CD4-positive, alpha-beta T cell (primary cell): ENCODE measurements at regions of chr14 and their contacts with region 1.

Region 1: GRCh38 chr14:77799863-77800730 is at the start of gene ADCK1:
- DNase-seq: peak; percentile 62 to 90 (median 78)
- ATAC-seq: peak; percentile 90
- H3K4me3 ChIP-seq: peak within 1 kb of the TSS; percentile 67
- H3K4me3 Mint-ChIP-seq: peak within 1 kb of the TSS; percentile 85
- H3K27ac ChIP-seq: peak within 1 kb of the TSS; percentile 60 to 85
- H3K27ac Mint-ChIP-seq: peak within 1 kb of the TSS; percentile 74
- H3K4me1 ChIP-seq: peaks cover 13% of the 10 kb centered on the region
- H3K4me1 Mint-ChIP-seq: peaks cover 11% of the 10 kb centered on the region
- H3K27me3 ChIP-seq: no peaks in the 10 kb centered on the region
- H3K27me3 Mint-ChIP-seq: no peaks in the 10 kb centered on the region
- CTCF ChIP-seq: peak; percentile 38
- total RNA-seq, gene ADCK1: 7.1 to 8.7 TPM

Region 2: DNA sequence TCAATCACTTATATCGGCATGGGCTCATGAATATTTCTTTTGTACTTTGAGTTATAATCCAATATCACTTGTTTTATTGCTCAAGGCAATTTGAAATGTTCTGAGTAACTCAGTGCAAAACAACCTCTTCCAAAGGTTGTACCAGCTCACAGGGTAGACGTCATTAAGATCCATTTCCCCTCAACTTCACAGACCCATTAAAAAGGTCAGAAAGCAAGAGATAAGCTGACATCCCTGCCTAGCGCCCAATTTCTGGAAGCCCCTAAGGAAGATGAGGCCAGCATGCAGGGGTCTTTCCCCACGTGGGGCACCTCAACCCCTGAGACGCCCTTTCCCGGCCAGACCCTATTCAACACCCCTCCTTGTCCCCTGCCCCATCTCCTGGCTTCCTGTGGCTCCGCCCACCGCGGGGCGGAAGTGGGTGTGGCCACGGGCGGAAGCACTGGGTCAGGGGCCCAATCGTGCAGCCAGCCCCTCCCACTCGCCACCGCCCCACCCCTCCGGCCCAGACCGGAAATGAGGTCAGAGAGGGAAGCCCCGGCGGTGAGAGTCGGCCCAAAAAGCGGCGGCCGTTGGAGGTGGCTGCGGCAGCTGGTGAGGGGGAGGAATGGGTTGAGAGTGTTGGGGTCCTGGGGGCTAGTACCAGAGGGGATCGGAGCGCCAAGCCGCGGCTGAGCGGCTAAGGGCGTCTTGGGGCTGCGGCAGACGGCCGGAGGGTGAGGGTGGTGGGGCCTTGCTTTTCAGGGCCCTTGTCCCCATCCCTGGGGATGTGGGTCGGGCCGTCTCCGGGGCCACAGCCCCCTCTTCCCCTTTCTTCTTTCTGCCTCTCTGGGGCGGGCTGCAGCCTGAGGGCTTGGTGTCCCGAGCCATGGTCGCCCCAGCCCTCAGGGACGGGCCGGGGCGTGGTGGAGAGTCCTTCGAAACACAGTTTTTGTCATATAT is 1648.4 kb before region 1 on chr14 and contains the start of gene GPATCH2L:
- CTCF ChIA-PET with region 1: no interaction called
- POLR2A ChIA-PET with region 1: no interaction called
- intact Hi-C with region 1: loop called in 1 of 2 experiments (anchors 10 kb)
- DNase-seq: peak; percentile 93 to 99 (median 96)
- ATAC-seq: peak; percentile 85
- H3K4me3 ChIP-seq: peak within 1 kb of the TSS; percentile 97
- H3K4me3 Mint-ChIP-seq: peak within 1 kb of the TSS; percentile 96
- H3K27ac ChIP-seq: peak within 1 kb of the TSS; percentile 94 to 95
- H3K27ac Mint-ChIP-seq: peak within 1 kb of the TSS; percentile 95
- H3K4me1 ChIP-seq: peaks cover 39% of the 10 kb centered on the region
- H3K4me1 Mint-ChIP-seq: peaks cover 57% of the 10 kb centered on the region
- H3K27me3 ChIP-seq: no peaks in the 10 kb centered on the region
- H3K27me3 Mint-ChIP-seq: no peaks in the 10 kb centered on the region
- CTCF ChIP-seq: no peak
- total RNA-seq, gene GPATCH2L: 56.0 to 61.5 TPM

Region 3: GRCh38 chr14:77376771-77377501 is 423.2 kb before region 1 on chr14 and contains the starts of genes SAMD15 and TMED8:
- CTCF ChIA-PET with region 1: no interaction called
- POLR2A ChIA-PET with region 1: no interaction called
- intact Hi-C with region 1: loop called in 1 of 2 experiments (anchors 10 kb)
- DNase-seq: peak; percentile 61 to 93 (median 79)
- ATAC-seq: peak; percentile 96
- H3K4me3 ChIP-seq: peak within 1 kb of the TSS; percentile 78
- H3K4me3 Mint-ChIP-seq: peak within 1 kb of the TSS; percentile 95
- H3K27ac ChIP-seq: peak within 1 kb of the TSS; percentile 67 to 89
- H3K27ac Mint-ChIP-seq: peak within 1 kb of the TSS; percentile 74
- H3K4me1 ChIP-seq: peaks cover 21% of the 10 kb centered on the region
- H3K4me1 Mint-ChIP-seq: peaks cover 41% of the 10 kb centered on the region
- H3K27me3 ChIP-seq: no peaks in the 10 kb centered on the region
- H3K27me3 Mint-ChIP-seq: no peaks in the 10 kb centered on the region
- CTCF ChIP-seq: no peak
- total RNA-seq, gene SAMD15: 0.34 TPM in 1 of 2 experiments, not detected in the other
- total RNA-seq, gene TMED8: 4.9 to 5.1 TPM

Region 4: GRCh38 chr14:77707724-77708408 is 92.2 kb before region 1 on chr14 and contains the starts of genes ALKBH1 and SLIRP:
- CTCF ChIA-PET with region 1: no interaction called
- POLR2A ChIA-PET with region 1: interaction called, 3 read pairs
- intact Hi-C with region 1: loop called (anchors 2 to 10 kb)
- DNase-seq: peak; percentile 79 to 93 (median 84)
- ATAC-seq: peak; percentile 98
- H3K4me3 ChIP-seq: peak within 1 kb of the TSS; percentile 82
- H3K4me3 Mint-ChIP-seq: peak within 1 kb of the TSS; percentile 95
- H3K27ac ChIP-seq: peak within 1 kb of the TSS; percentile 10 to 65
- H3K27ac Mint-ChIP-seq: peak within 1 kb of the TSS; percentile 87
- H3K4me1 ChIP-seq: peaks cover 19% of the 10 kb centered on the region
- H3K4me1 Mint-ChIP-seq: peaks cover 54% of the 10 kb centered on the region
- H3K27me3 ChIP-seq: no peaks in the 10 kb centered on the region
- H3K27me3 Mint-ChIP-seq: no peaks in the 10 kb centered on the region
- CTCF ChIP-seq: no peak
- total RNA-seq, gene ALKBH1: 5.6 to 8.5 TPM
- total RNA-seq, gene SLIRP: 46.8 to 49.7 TPM